CD4-positive, alpha-beta T cell (primary cell): ENCODE measurements at regions of chr2 and their contacts with region 1.

Region 1: DNA sequence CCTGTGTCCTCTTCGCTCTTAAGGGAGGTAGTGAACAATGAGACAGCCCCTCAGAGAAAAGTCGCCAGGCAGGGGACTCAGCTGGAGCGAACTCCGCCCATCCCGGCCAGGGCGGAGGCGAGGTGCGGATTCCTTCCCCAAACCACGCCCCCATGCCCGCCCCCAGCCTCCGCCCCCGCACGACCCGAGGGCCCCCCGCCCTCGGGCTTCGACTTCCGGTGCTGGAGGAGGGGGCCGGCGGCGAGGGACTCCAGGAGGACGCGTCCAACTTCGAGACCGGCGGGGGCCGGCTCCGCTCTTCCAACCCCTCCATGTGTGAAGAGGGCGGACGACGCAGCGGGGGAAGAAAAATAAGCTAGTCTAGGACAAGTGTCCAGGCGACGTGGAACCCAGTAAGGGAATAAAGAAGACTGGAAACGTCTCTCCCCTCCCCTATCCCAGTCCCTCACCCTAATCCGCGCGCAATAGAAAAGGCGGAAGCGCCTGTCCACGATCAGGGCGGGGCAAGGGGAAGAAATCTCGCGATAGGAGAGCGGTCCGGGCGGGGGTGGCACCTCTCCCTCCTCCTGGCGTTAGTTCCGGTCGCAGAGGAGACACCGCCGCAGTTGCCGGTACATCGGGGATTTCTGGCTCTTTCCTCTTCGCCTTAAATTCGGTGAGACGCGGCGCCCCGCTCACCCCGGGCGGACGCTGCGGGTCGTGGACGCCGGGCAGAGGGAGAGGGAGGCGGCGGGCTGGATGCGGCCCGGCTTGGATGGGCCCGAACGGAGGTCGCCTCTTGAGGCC is at the start of gene BZW1:
- DNase-seq: peak; percentile 94 to 98 (median 96)
- ATAC-seq: peak; percentile 86
- H3K4me3 ChIP-seq: peak within 1 kb of the TSS; percentile 77
- H3K4me3 Mint-ChIP-seq: peak within 1 kb of the TSS; percentile 100
- H3K27ac ChIP-seq: peak within 1 kb of the TSS; percentile 97 to 99
- H3K27ac Mint-ChIP-seq: peak within 1 kb of the TSS; percentile 93
- H3K4me1 ChIP-seq: peaks cover 20% of the 10 kb centered on the region
- H3K4me1 Mint-ChIP-seq: peaks cover 57% of the 10 kb centered on the region
- H3K27me3 ChIP-seq: no peaks in the 10 kb centered on the region
- H3K27me3 Mint-ChIP-seq: no peaks in the 10 kb centered on the region
- CTCF ChIP-seq: no peak
- total RNA-seq, gene BZW1: 190 to 192 TPM

Region 2: DNA sequence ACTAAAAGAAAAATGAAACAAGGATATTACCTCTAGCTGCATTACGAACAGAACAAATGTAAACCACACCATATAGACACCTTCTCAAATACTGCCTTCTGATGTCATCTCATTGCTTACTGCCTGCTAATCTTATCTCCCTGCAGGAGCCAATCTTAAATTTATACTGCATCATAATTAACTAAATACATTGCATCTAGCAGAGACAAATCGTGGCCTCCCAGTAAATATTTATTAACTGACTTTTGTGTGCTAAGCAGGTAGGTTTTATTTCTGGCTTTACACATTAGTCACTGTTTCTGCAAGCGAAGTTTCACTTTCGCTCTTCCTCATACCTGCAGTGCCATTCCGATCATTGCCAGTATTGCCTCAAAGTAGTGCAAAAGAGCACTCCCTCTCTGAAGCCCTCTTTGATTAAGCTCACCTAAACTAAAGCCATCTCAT is 437.5 kb before region 1 on chr2:
- CTCF ChIA-PET with region 1: no interaction called
- POLR2A ChIA-PET with region 1: no interaction called
- intact Hi-C with region 1: loop called in 1 of 2 experiments (anchors 10 kb)
- DNase-seq: peak in 6 of 14 experiments; percentile 7 to 81 (median 64)
- ATAC-seq: peak; percentile 90
- H3K4me3 ChIP-seq: peak overlapping the region; percentile 52
- H3K4me3 Mint-ChIP-seq: peak overlapping the region; percentile 88
- H3K27ac ChIP-seq: peak overlapping the region; percentile 36 to 56
- H3K27ac Mint-ChIP-seq: peak overlapping the region; percentile 88
- H3K4me1 ChIP-seq: peaks cover 28% of the 10 kb centered on the region
- H3K4me1 Mint-ChIP-seq: peaks cover 58% of the 10 kb centered on the region
- H3K27me3 ChIP-seq: no peaks in the 10 kb centered on the region
- H3K27me3 Mint-ChIP-seq: no peaks in the 10 kb centered on the region
- CTCF ChIP-seq: no peak

Region 3: DNA sequence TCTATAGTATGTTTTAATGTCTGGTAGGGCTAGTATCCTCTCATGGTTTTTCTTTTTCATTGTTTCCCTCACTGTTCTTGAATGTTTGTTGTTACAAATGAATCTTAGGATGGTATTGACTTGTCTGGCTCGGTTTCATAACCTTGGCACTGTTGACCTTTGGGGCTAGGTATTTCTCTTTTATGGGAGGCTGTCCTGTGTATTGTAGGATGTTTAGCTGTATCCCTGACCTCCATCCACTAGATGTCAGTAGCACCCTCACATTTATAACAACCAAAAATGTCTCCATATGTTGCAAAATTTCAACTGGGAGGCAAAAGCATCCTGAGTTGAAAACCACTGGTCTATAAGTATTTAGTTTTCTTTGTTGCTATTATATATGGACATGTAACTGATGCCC is 232.8 kb before region 1 on chr2:
- CTCF ChIA-PET with region 1: no interaction called
- POLR2A ChIA-PET with region 1: interaction called, 3 read pairs
- intact Hi-C with region 1: loop called in 1 of 2 experiments (anchors 2 kb)
- DNase-seq: peak in 3 of 14 experiments; percentile 24 to 45 (median 39)
- ATAC-seq: peak; percentile 43
- H3K4me3 ChIP-seq: no peak overlapping the region
- H3K4me3 Mint-ChIP-seq: no peak overlapping the region
- H3K27ac ChIP-seq: no peak overlapping the region
- H3K27ac Mint-ChIP-seq: no peak overlapping the region
- H3K4me1 ChIP-seq: no peaks in the 10 kb centered on the region
- H3K4me1 Mint-ChIP-seq: no peaks in the 10 kb centered on the region
- H3K27me3 ChIP-seq: no peaks in the 10 kb centered on the region
- H3K27me3 Mint-ChIP-seq: no peaks in the 10 kb centered on the region
- CTCF ChIP-seq: peak; percentile 31

Region 4: DNA sequence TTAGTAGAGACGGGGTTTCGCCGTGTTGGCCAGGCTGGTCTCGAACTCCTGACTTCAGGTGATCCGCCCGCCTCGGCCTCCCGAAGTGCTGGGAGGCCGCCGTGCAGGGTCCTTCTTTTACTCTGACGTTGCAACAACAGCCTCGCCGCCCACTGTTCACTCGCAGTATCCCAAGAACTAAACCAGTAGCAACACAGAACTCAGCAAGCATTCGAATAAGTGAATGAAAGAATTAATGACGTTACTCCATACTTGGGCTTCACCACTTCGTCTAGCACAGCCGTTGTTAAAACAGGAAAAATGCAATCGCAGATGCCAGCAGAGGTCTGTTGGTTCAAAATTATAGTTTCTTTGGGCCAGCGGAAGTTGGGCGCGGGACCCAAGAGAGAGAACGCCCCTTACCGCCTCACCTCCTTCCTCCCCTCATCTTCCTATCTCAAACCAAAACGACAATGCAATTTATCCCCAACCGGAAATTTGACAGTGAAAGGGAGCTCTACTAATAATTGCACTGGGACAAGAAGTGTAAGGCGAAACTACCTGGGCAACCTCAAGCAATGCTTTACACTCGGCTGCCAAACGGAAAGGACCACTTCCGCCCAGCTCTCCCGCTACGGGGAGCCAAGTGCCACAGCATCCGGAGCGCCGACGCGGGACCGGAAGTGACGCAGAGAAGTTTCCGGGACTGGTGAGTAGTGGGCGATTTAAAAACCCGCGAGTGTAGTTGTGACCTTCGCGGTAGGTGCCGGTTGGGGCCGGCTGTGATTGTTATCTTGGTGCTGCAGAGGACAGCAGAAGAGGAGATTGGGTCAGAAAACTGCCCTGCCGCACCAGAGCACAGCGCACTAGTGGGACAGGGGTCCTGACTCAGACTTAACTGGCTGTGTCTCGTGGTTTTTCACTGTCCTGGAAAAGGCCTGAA is 77.4 kb after region 1 on chr2 and contains the starts of genes NIF3L1 and PPIL3:
- CTCF ChIA-PET with region 1: no interaction called
- POLR2A ChIA-PET with region 1: interaction called, 21 read pairs
- intact Hi-C with region 1: loop called (anchors 1 to 2 kb)
- DNase-seq: peak; percentile 93 to 99 (median 95)
- ATAC-seq: peak; percentile 67
- H3K4me3 ChIP-seq: peak within 1 kb of the TSS; percentile 64
- H3K4me3 Mint-ChIP-seq: peak within 1 kb of the TSS; percentile 94
- H3K27ac ChIP-seq: peak within 1 kb of the TSS; percentile 92 to 94
- H3K27ac Mint-ChIP-seq: peak within 1 kb of the TSS; percentile 99
- H3K4me1 ChIP-seq: peaks cover 36% of the 10 kb centered on the region
- H3K4me1 Mint-ChIP-seq: peaks cover 42% of the 10 kb centered on the region
- H3K27me3 ChIP-seq: no peaks in the 10 kb centered on the region
- H3K27me3 Mint-ChIP-seq: no peaks in the 10 kb centered on the region
- CTCF ChIP-seq: no peak
- total RNA-seq, gene NIF3L1: 6.1 to 6.7 TPM
- total RNA-seq, gene PPIL3: 23.1 to 29.8 TPM

Region 5: DNA sequence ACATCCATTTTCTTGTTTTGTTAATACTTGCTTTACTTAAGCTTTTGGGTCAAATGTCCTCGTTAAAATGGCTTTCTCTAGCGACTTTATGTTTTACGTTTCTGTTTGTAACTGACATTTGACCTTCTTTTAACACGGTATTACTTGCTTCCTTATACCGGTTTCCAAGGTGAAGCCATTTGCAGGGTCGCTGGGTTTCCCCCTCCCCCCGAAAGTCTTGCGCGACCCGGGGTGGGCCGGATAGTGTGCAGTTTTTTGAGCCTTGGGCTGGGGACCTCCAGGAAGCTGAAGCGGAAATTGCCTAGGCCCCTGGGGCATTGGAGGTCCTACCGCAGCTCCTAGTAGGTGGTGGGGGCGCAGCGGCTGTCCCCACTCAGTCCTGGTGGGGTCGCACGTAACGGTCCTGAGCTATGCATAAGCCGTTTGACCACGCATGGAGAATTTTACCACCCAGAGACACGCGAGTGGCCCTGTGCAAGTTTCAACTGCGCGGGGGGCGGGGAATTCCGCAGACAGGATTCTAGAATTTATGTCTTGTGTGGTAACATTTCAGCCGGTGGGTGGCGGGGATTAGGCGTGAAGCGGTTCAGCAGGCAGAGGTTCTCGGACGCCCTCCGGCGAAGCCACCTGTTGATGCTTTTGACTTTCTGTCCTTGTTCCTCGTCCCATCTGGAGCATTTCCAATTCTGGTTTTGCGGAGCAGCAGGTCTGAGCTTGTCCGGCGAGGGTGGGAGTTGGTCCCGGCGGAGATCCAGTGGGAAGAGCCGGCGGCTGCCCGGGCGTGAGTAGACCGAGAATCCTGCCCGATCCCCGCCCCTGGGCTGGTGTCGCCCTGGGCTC is 306.8 kb after region 1 on chr2:
- CTCF ChIA-PET with region 1: no interaction called
- POLR2A ChIA-PET with region 1: interaction called, 13 read pairs
- intact Hi-C with region 1: no loop called
- DNase-seq: peak; percentile 80 to 93 (median 86)
- ATAC-seq: peak; percentile 46
- H3K4me3 ChIP-seq: peak overlapping the region; percentile 84
- H3K4me3 Mint-ChIP-seq: peak overlapping the region; percentile 88
- H3K27ac ChIP-seq: peak overlapping the region; percentile 78 to 98
- H3K27ac Mint-ChIP-seq: peak overlapping the region; percentile 93
- H3K4me1 ChIP-seq: peaks cover 40% of the 10 kb centered on the region
- H3K4me1 Mint-ChIP-seq: peaks cover 67% of the 10 kb centered on the region
- H3K27me3 ChIP-seq: no peaks in the 10 kb centered on the region
- H3K27me3 Mint-ChIP-seq: no peaks in the 10 kb centered on the region
- CTCF ChIP-seq: peak; percentile 67

Region 6: GRCh38 chr2:202033321-202034248 is 1222.1 kb after region 1 on chr2 and contains the start of gene FZD7:
- CTCF ChIA-PET with region 1: no interaction called
- POLR2A ChIA-PET with region 1: no interaction called
- intact Hi-C with region 1: loop called in 1 of 2 experiments (anchors 5 kb)
- DNase-seq: peak; percentile 69 to 91 (median 82)
- ATAC-seq: peak; percentile 78
- H3K4me3 ChIP-seq: peak within 1 kb of the TSS; percentile 95
- H3K4me3 Mint-ChIP-seq: peak within 1 kb of the TSS; percentile 94
- H3K27ac ChIP-seq: no peak within 1 kb of the TSS
- H3K27ac Mint-ChIP-seq: peak within 1 kb of the TSS; percentile 45
- H3K4me1 ChIP-seq: peaks cover 31% of the 10 kb centered on the region
- H3K4me1 Mint-ChIP-seq: peaks cover 12% of the 10 kb centered on the region
- H3K27me3 ChIP-seq: peaks cover 17 to 30% of the 10 kb centered on the region in 2 experiments
- H3K27me3 Mint-ChIP-seq: peaks cover 9% of the 10 kb centered on the region
- CTCF ChIP-seq: no peak
- total RNA-seq, gene FZD7: 0.17 to 0.25 TPM